Caco-2 (cell line): ENCODE measurements at regions of chr6 and their contacts with region 1.

Region 1: GRCh38 chr6:42901536-42901957 is 14.3 kb upstream of the PTCRA start:
- DNase-seq: peak; percentile 78 to 85
- H3K4me3 ChIP-seq: no peak overlapping the region
- H3K4me3 Mint-ChIP-seq: peak overlapping the region; percentile 53
- H3K27ac Mint-ChIP-seq: no peak overlapping the region
- H3K4me1 ChIP-seq: peaks cover 21% of the 10 kb centered on the region
- H3K4me1 Mint-ChIP-seq: peaks cover 19% of the 10 kb centered on the region
- H3K27me3 ChIP-seq: no peaks in the 10 kb centered on the region
- H3K27me3 Mint-ChIP-seq: no peaks in the 10 kb centered on the region
- CTCF ChIP-seq: peak; percentile 74 to 86

Region 2: DNA sequence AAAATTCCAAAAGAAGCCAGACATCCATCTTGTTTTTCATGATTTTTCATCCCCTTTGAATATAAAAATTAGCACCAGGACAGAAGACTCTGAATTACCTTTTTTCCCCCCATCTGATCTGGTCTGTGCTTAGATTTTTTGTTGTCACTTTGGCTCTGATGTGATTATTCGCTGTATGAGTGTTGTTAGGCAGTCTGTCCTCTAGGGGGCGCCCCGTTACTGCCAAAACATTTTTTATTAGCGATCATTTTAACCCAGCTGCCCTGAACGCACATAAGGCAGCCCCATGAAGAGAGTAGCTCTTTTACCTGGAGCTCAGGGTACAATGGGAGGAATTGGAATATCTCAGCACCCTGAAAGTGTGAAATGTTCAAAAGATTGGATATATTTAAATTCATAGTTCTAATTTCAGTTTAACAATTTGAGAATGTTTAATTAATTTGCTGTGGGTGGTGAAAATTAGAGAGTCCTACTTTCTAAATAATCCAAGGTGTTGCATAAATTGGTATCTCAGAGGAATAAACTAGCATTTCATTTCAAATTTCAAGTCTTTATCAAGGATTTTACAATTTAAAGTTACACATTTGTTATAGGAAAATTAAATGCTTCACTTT is 239.9 kb before region 1 on chr6:
- CTCF ChIA-PET with region 1: no interaction called
- POLR2A ChIA-PET with region 1: no interaction called
- intact Hi-C with region 1: loop called (anchors 1 kb)
- DNase-seq: peak; percentile 65 to 78
- H3K4me3 ChIP-seq: no peak overlapping the region
- H3K4me3 Mint-ChIP-seq: no peak overlapping the region
- H3K27ac Mint-ChIP-seq: no peak overlapping the region
- H3K4me1 ChIP-seq: no peaks in the 10 kb centered on the region
- H3K4me1 Mint-ChIP-seq: no peaks in the 10 kb centered on the region
- H3K27me3 ChIP-seq: no peaks in the 10 kb centered on the region
- H3K27me3 Mint-ChIP-seq: no peaks in the 10 kb centered on the region
- CTCF ChIP-seq: peak; percentile 83 to 85

Region 3: GRCh38 chr6:42845327-42845694 is 56.2 kb before region 1 on chr6:
- CTCF ChIA-PET with region 1: no interaction called
- POLR2A ChIA-PET with region 1: no interaction called
- intact Hi-C with region 1: no loop called
- DNase-seq: peak; percentile 64 to 69
- H3K4me3 ChIP-seq: no peak overlapping the region
- H3K4me3 Mint-ChIP-seq: no peak overlapping the region
- H3K27ac Mint-ChIP-seq: peak overlapping the region; percentile 27
- H3K4me1 ChIP-seq: peaks cover 8% of the 10 kb centered on the region
- H3K4me1 Mint-ChIP-seq: peaks cover 7% of the 10 kb centered on the region
- H3K27me3 ChIP-seq: no peaks in the 10 kb centered on the region
- H3K27me3 Mint-ChIP-seq: no peaks in the 10 kb centered on the region
- CTCF ChIP-seq: no peak

Region 4: DNA sequence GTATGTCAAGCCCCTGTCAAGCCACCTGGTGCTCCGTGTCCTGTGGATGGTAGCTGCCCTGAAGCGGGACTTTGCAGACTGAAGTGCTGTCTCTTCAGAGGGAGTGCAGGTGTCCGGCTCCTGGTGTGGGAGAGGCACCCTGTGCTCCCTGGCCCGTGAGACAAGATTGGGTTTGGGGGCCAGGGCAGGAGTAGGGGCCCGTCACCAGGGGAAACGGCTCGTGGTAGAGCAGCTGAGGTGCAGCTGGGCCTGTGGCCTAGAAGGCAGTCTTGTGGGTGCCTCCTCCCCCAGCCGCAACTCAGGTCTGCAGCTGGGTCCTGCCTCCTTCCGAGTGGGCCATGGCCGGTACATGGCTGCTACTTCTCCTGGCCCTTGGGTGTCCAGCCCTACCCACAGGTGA is 14.2 kb after region 1 on chr6 and contains the start of gene PTCRA:
- CTCF ChIA-PET with region 1: no interaction called
- POLR2A ChIA-PET with region 1: no interaction called
- intact Hi-C with region 1: no loop called
- DNase-seq: no peak
- H3K4me3 ChIP-seq: no peak within 1 kb of the TSS
- H3K4me3 Mint-ChIP-seq: no peak within 1 kb of the TSS
- H3K27ac Mint-ChIP-seq: no peak within 1 kb of the TSS
- H3K4me1 ChIP-seq: no peaks in the 10 kb centered on the region
- H3K4me1 Mint-ChIP-seq: no peaks in the 10 kb centered on the region
- H3K27me3 ChIP-seq: no peaks in the 10 kb centered on the region; the same call in 1 of the 2 replicates
- H3K27me3 Mint-ChIP-seq: no peaks in the 10 kb centered on the region
- CTCF ChIP-seq: no peak
- total RNA-seq, gene PTCRA: not detected in 2 replicates

Region 5: DNA sequence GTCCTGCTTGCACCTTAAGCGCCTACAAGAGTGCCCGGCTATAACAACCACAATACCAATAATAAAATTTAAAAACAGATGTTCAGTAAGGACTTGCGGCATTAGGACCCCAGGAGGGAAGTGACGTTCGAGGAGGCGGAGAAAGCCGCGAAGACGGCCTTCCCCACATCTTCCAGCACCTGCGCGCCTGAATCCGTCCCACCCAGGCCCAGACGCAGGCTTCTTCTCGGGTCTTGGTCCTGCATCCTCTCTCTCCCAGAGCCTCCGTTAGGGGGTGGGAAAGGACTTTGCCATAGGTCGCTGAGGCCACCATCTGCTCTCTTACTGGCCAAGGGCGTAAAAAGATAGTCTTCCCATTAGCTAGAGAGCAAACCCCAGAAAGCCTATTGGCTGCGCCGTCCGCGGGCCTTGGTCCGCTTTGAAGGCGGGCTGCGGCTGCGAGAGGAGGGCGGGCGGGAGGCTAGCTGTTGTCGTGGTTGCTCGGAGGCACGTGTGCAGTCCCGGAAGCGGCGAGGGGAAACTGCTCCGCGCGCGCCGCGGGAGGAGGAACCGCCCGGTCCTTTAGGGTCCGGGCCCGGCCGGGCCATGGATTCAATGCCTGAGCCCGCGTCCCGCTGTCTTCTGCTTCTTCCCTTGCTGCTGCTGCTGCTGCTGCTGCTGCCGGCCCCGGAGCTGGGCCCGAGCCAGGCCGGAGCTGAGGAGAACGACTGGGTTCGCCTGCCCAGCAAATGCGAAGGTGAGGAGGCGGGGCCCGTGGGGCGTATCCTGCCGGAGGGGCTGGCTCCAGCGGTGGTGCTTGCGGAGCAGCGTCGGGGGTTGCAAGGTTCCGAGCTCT is 27.7 kb after region 1 on chr6 and contains the start of gene CNPY3:
- CTCF ChIA-PET with region 1: interaction called, 4 read pairs
- POLR2A ChIA-PET with region 1: no interaction called
- intact Hi-C with region 1: loop called (anchors 1 kb)
- DNase-seq: peak; percentile 95 to 96
- H3K4me3 ChIP-seq: peak within 1 kb of the TSS; percentile 56
- H3K4me3 Mint-ChIP-seq: peak within 1 kb of the TSS; percentile 100
- H3K27ac Mint-ChIP-seq: peak within 1 kb of the TSS; percentile 76
- H3K4me1 ChIP-seq: peaks cover 8% of the 10 kb centered on the region
- H3K4me1 Mint-ChIP-seq: peaks cover 13% of the 10 kb centered on the region
- H3K27me3 ChIP-seq: no peaks in the 10 kb centered on the region
- H3K27me3 Mint-ChIP-seq: no peaks in the 10 kb centered on the region
- CTCF ChIP-seq: no peak
- total RNA-seq, gene CNPY3: 49.2 and 56.1 TPM in 2 replicates

Region 6: GRCh38 chr6:42984001-42984923 is 82.7 kb after region 1 on chr6 and contains the start of gene PPP2R5D:
- CTCF ChIA-PET with region 1: no interaction called
- POLR2A ChIA-PET with region 1: interaction called, 3 read pairs
- intact Hi-C with region 1: loop called (anchors 10 kb)
- DNase-seq: peak; percentile 97
- H3K4me3 ChIP-seq: peak within 1 kb of the TSS; percentile 66
- H3K4me3 Mint-ChIP-seq: peak within 1 kb of the TSS; percentile 91
- H3K27ac Mint-ChIP-seq: peak within 1 kb of the TSS; percentile 87
- H3K4me1 ChIP-seq: no peaks in the 10 kb centered on the region
- H3K4me1 Mint-ChIP-seq: peaks cover 36% of the 10 kb centered on the region
- H3K27me3 ChIP-seq: no peaks in the 10 kb centered on the region
- H3K27me3 Mint-ChIP-seq: no peaks in the 10 kb centered on the region
- CTCF ChIP-seq: no peak
- total RNA-seq, gene PPP2R5D: 44.4 and 45.0 TPM in 2 replicates

Region 7: GRCh38 chr6:43013843-43014433 is 112.4 kb after region 1 on chr6 and contains the starts of genes KLHDC3 and MEA1:
- CTCF ChIA-PET with region 1: no interaction called
- POLR2A ChIA-PET with region 1: no interaction called
- intact Hi-C with region 1: loop called (anchors 1 kb)
- DNase-seq: peak; percentile 99
- H3K4me3 ChIP-seq: peak within 1 kb of the TSS; percentile 68
- H3K4me3 Mint-ChIP-seq: peak within 1 kb of the TSS; percentile 89
- H3K27ac Mint-ChIP-seq: peak within 1 kb of the TSS; percentile 80
- H3K4me1 ChIP-seq: 0 out of 2 replicates have a peak, but pooled peaks cover 4% of the 10 kb centered on the region
- H3K4me1 Mint-ChIP-seq: peaks cover 21% of the 10 kb centered on the region
- H3K27me3 ChIP-seq: no peaks in the 10 kb centered on the region
- H3K27me3 Mint-ChIP-seq: no peaks in the 10 kb centered on the region
- CTCF ChIP-seq: no peak
- total RNA-seq, gene KLHDC3: 62.9 and 66.8 TPM in 2 replicates
- total RNA-seq, gene MEA1: 60.3 and 62.3 TPM in 2 replicates

Region 8: GRCh38 chr6:43143235-43144124 is 241.9 kb after region 1 on chr6:
- CTCF ChIA-PET with region 1: no interaction called
- POLR2A ChIA-PET with region 1: no interaction called
- intact Hi-C with region 1: loop called (anchors 2 kb)
- DNase-seq: peak; percentile 77 to 81
- H3K4me3 ChIP-seq: no peak overlapping the region
- H3K4me3 Mint-ChIP-seq: no peak overlapping the region
- H3K27ac Mint-ChIP-seq: peak overlapping the region; percentile 69
- H3K4me1 ChIP-seq: no peaks in the 10 kb centered on the region; the same call in 1 of the 2 replicates
- H3K4me1 Mint-ChIP-seq: no peaks in the 10 kb centered on the region
- H3K27me3 ChIP-seq: no peaks in the 10 kb centered on the region
- H3K27me3 Mint-ChIP-seq: no peaks in the 10 kb centered on the region
- CTCF ChIP-seq: peak; percentile 70 to 75

Region 9: DNA sequence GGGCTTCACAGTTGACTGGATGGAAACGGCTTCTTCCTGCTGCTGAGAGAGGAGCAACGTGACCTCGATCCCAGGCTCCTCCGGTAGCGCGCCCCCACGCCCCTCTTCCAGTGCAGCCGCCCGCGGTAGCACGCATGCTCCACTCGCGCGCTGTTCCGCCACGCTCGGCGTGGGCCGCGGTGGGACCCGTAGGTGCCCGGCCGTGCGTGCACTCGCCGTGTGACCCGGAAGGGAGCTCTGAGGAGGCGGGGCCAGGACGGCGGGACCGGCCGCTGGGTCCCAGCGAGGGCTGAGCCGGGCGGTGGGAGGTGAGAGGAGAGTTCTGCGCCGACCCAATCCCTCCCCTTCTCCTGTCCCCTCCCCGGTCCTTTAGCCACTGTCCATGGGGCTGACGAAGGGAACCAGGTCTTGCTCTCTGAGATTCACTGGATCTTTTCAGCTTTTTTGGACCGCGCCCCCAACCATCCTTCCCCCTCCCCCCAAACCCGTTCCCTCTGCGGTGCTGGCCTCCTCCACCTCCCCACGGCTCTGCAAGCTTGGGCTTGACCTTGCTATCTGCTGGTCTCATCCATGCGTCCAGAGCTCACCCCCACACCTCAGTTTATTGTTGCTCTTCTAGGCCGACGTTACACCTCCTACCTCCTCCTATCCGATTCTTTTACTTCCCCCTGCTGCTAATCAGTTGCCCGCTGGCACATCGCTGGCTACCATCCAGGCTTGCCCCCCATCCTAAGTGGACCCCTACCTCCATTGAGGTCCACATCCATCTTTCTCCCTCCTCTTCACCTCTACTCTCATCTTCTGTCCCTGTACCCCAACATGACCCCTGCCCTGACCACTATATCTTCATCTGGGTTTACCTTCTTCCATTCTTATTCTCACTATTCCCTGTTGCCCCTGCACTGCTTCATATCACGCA is 280.7 kb after region 1 on chr6 and contains the start of gene CUL9:
- CTCF ChIA-PET with region 1: no interaction called
- POLR2A ChIA-PET with region 1: no interaction called
- intact Hi-C with region 1: no loop called
- DNase-seq: peak; percentile 71 to 83
- H3K4me3 ChIP-seq: peak within 1 kb of the TSS; percentile 61
- H3K4me3 Mint-ChIP-seq: peak within 1 kb of the TSS; percentile 91
- H3K27ac Mint-ChIP-seq: peak within 1 kb of the TSS; percentile 33
- H3K4me1 ChIP-seq: no peaks in the 10 kb centered on the region
- H3K4me1 Mint-ChIP-seq: peaks cover 14% of the 10 kb centered on the region
- H3K27me3 ChIP-seq: no peaks in the 10 kb centered on the region
- H3K27me3 Mint-ChIP-seq: no peaks in the 10 kb centered on the region
- CTCF ChIP-seq: no peak
- total RNA-seq, gene CUL9: 16.7 and 16.8 TPM in 2 replicates

Region 10: GRCh38 chr6:43334466-43335095 is 433.0 kb after region 1 on chr6:
- CTCF ChIA-PET with region 1: interaction called, 3 read pairs
- POLR2A ChIA-PET with region 1: no interaction called
- intact Hi-C with region 1: loop called (anchors 10 kb)
- DNase-seq: peak in 1 of 2 experiments; percentile 55
- H3K4me3 ChIP-seq: no peak overlapping the region
- H3K4me3 Mint-ChIP-seq: no peak overlapping the region
- H3K27ac Mint-ChIP-seq: no peak overlapping the region
- H3K4me1 ChIP-seq: peaks cover 14% of the 10 kb centered on the region
- H3K4me1 Mint-ChIP-seq: peaks cover 14% of the 10 kb centered on the region
- H3K27me3 ChIP-seq: no peaks in the 10 kb centered on the region
- H3K27me3 Mint-ChIP-seq: peaks cover 3% of the 10 kb centered on the region
- CTCF ChIP-seq: peak; percentile 53 to 58